ENCODE measurements at regions of chr3 and their contacts with region 1.

Region 1: DNA sequence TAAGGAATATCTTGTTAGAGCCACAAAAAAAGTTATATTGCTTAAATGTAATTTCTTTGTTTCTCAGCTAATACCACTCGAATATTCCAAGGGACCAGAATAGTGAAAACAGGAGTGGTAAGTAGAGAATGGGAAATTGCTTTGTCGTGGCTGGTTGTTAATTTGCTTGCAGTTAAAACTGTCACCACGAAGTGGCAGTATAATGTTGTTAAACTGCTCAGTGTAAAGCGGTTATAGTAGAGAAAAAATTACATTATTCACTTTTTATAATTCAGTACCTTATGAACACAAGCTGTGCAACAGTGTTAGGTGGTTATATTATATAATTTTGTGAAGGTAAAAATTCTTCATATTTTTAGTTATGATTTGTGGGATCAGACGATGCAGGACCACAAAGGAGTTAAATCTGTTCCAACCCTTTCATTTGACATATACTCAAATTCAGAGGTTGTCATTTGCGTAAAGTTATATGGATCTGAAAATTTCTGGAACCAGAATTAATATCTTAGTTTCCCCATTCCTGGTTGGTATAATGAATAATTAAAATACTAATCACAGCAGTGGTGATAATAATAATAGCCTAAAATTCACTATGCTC is 171.8 kb downstream of the FEZF2 start:
- DNase-seq: peak in 2 of 7 donors; percentile 20 to 26
- H3K4me3 ChIP-seq: no peak overlapping the region
- H3K27ac ChIP-seq: no peak overlapping the region
- H3K4me1 ChIP-seq: no peaks in the 10 kb centered on the region
- H3K27me3 ChIP-seq: no peaks in the 10 kb centered on the region
- CTCF ChIP-seq: peak; percentile 39 to 71 (median 55)
- POLR2A ChIP-seq: no peak

Region 2: GRCh38 chr3:62318750-62319569 is 117.4 kb after region 1 on chr3:
- intact Hi-C with region 1: loop called (anchors 10 kb)
- DNase-seq: peak; percentile 82 to 96 (median 87)
- H3K4me3 ChIP-seq: peak overlapping the region; percentile 31 to 64 (median 49)
- H3K27ac ChIP-seq: peak overlapping the region; percentile 47 to 92 (median 54)
- H3K4me1 ChIP-seq: peaks cover 0 to 3% of the 10 kb centered on the region in 2 donors
- H3K27me3 ChIP-seq: no peaks in the 10 kb centered on the region
- CTCF ChIP-seq: no peak
- POLR2A ChIP-seq: peak; percentile 68 to 76

Measured in adrenal gland (tissue), 19 donors.